AG04450 (cell line): ENCODE measurements at regions of chr1 and their contacts with region 1.

Region 1: DNA sequence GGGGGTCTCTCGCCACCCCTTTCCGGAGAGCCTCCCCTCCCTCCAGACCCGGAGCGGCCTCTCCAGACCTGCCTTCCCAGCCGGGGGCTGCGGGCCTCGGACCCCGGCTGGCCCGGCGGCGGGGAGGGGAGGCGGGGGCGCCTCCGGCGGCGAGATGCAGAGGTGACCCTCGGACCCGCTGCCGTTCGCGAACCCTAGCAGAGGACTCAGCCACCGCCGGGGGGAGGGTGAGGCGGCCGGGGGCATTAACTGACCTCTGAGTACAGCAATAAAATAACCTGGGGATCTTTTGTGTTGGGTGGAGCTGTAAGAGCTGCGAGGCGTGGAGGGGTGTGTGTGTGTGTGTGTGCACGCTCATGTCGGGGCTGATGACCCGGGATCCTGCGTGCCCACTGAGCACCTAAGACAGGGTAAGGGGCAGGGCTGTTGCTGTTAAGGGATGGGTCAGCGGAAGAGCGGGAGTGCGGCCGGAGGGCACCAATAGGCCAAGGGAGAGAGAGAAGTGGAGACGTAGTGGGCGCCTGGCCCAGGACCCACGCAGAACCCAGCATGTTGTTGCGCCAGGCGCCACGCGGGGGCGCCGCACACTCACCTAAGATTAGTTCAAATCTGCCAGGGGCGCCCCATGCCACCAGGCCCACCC is 6.3 kb downstream of the HAPLN2 start:
- DNase-seq: no peak
- H3K4me3 ChIP-seq: no peak overlapping the region
- H3K27ac ChIP-seq: no peak overlapping the region
- H3K27me3 ChIP-seq: peaks cover 46% of the 10 kb centered on the region
- CTCF ChIP-seq: peak; percentile 80

Region 2: DNA sequence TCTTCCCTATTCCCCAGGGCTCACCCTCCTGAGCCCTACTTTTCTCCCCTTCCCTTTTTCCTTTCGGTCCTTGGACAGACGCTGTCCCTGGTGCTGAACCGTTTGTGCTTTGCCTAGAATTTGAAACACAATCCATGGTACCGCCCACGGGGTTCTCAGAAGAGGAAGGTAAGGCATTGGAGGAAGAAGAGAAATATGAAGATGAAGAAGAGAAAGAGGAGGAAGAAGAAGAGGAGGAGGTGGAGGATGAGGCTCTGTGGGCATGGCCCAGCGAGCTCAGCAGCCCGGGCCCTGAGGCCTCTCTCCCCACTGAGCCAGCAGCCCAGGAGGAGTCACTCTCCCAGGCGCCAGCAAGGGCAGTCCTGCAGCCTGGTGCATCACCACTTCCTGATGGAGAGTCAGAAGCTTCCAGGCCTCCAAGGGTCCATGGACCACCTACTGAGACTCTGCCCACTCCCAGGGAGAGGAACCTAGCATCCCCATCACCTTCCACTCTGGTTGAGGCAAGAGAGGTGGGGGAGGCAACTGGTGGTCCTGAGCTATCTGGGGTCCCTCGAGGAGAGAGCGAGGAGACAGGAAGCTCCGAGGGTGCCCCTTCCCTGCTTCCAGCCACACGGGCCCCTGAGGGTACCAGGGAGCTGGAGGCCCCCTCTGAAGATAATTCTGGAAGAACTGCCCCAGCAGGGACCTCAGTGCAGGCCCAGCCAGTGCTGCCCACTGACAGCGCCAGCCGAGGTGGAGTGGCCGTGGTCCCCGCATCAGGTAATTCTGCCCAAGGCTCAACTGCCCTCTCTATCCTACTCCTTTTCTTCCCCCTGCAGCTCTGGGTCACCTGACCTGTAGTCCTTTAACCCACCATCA is 26.8 kb after region 1 on chr1:
- CTCF ChIA-PET with region 1: interaction called, 175 read pairs
- POLR2A ChIA-PET with region 1: no interaction called
- DNase-seq: no peak
- H3K4me3 ChIP-seq: no peak overlapping the region
- H3K27ac ChIP-seq: no peak overlapping the region
- H3K27me3 ChIP-seq: peaks cover 64% of the 10 kb centered on the region
- CTCF ChIP-seq: no peak